ENCODE measurements at regions of chr1 and their contacts with region 1.

Region 1: DNA sequence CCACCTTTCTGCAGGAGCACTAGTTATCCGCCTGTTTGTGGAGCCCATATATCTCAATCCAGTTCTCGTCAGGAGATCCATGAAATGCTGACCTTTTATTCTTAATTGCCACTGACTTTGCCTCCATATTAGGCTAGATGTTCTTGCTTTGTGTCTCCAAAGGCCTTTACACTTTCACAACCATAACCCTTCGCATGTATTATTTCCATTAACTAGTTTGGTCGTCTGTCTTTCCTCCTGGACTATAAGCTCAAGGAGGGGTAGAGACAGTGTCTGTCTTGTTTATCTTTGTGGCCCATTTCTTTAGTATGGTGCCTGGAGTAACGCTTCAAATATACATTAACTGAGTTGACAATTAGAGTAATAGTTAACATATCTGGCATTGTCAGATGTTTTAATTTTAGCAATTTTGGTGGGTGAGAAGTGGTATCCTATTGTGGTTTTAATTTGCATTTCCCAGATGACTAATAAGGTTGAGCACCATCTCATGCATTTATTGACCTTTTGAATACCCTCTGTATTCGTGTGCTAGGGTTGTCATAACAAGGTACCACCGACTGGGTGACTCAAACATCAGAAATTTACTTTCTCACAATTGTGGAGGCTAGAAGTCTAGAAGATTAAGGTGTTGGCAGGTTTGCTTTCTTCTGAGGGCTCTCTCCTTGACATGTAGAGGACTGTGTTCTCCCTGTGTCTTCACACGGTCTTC is 21.7 kb upstream of the IL12RB2 start:
- DNase-seq: peak; percentile 55
- H3K4me3 Mint-ChIP-seq: no peak overlapping the region
- H3K27ac Mint-ChIP-seq: peak overlapping the region; percentile 65
- H3K4me1 Mint-ChIP-seq: peaks cover 52% of the 10 kb centered on the region
- H3K27me3 Mint-ChIP-seq: no peaks in the 10 kb centered on the region

Region 2: GRCh38 chr1:67110352-67110751 is 175.6 kb before region 1 on chr1:
- CTCF ChIA-PET with region 1: no interaction called
- intact Hi-C with region 1: no loop called
- DNase-seq: no peak
- H3K4me3 Mint-ChIP-seq: no peak overlapping the region
- H3K27ac Mint-ChIP-seq: no peak overlapping the region
- H3K4me1 Mint-ChIP-seq: no peaks in the 10 kb centered on the region
- H3K27me3 Mint-ChIP-seq: no peaks in the 10 kb centered on the region

Region 3: DNA sequence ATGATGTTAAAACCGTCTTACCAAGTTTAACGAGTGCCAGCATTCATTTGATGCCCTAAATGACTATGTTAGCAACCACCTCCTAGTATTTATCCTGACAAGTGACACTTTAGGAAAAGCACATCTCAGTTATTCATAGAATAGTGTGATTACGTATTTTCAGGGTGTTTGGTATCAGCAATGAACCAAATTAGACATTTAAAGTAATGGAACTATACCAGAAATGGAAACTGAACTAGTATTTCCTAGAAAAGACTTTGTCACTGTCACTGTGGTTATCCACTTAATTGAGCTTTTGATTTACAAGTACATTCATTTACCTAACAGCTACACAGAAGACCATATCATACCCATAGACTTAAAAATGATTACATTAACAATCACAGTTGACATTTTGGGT is 18.1 kb after region 1 on chr1:
- CTCF ChIA-PET with region 1: interaction called, 4 read pairs
- intact Hi-C with region 1: loop called (anchors 1 kb)
- DNase-seq: no peak
- H3K4me3 Mint-ChIP-seq: no peak overlapping the region
- H3K27ac Mint-ChIP-seq: peak overlapping the region; percentile 86
- H3K4me1 Mint-ChIP-seq: peaks cover 23% of the 10 kb centered on the region
- H3K27me3 Mint-ChIP-seq: no peaks in the 10 kb centered on the region

Region 4: DNA sequence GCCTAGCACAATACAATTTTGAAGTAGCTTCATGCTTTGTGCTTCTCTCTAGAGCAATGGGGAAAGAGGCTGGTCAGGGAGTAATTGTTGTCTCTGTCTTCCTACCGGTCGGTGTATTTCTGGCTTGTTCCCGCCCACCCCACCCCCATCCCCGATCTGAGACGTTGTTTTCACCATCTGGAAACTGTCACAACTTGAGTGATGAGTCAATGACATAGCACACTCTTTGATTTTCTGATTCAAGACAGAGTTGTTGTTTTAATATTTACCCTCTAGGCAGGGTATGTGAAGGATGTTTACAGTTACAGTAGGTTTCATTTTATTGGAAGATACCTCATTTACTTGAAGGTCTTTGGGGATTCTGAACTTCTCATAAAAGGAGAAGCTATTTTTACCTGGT is 28.8 kb after region 1 on chr1:
- CTCF ChIA-PET with region 1: interaction called, 3 read pairs
- intact Hi-C with region 1: loop called (anchors 1 kb)
- DNase-seq: peak; percentile 56
- H3K4me3 Mint-ChIP-seq: peak overlapping the region; percentile 47
- H3K27ac Mint-ChIP-seq: peak overlapping the region; percentile 95
- H3K4me1 Mint-ChIP-seq: peaks cover 46% of the 10 kb centered on the region
- H3K27me3 Mint-ChIP-seq: no peaks in the 10 kb centered on the region

Region 5: GRCh38 chr1:67347688-67348472 is 61.9 kb after region 1 on chr1:
- CTCF ChIA-PET with region 1: no interaction called
- intact Hi-C with region 1: no loop called
- DNase-seq: peak; percentile 48
- H3K4me3 Mint-ChIP-seq: no peak overlapping the region
- H3K27ac Mint-ChIP-seq: peak overlapping the region; percentile 10
- H3K4me1 Mint-ChIP-seq: peaks cover 31% of the 10 kb centered on the region
- H3K27me3 Mint-ChIP-seq: no peaks in the 10 kb centered on the region

Region 6: DNA sequence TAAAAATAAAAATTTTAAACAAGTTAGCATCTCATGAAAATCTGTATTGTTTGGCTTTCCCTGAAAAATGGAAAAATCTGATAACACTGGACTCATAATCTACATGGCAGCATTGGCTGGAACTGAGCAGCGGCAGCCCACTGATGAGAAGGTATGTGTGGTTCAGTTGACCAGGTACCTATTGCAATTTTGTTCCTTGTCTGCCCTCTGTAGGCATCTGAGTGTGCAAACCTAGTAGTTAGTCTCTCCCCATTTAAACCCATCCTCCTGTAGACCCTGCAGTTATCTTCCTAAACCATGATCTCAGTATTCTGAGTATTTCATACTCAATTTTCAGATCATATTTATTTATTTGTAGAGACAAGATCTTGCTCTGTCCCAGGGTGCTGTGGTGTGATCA is 203.7 kb after region 1 on chr1:
- CTCF ChIA-PET with region 1: no interaction called
- intact Hi-C with region 1: loop called (anchors 5 kb)
- DNase-seq: peak; percentile 40
- H3K4me3 Mint-ChIP-seq: no peak overlapping the region
- H3K27ac Mint-ChIP-seq: no peak overlapping the region
- H3K4me1 Mint-ChIP-seq: peaks cover under 1% of the 10 kb centered on the region
- H3K27me3 Mint-ChIP-seq: no peaks in the 10 kb centered on the region

Measured in activated naive CD4-positive, alpha-beta T cell treated with anti-CD3 and anti-CD28 coated beads for 36 hours (primary cell).